Activated T-helper 1 cell treated with anti-CD3 and anti-CD28 coated beads, Interleukin-12 subunit alpha, Interleukin-12 subunit beta, Interleukin-2, Interleukin-4 antibody, amounts not matched to agents 30 ng/mL and 10 ng/mL and 1 ng/mL, durations not matched to agents 14 hours and 24 hours and 36 hours (primary cell): ENCODE measurements at regions of chr1 and their contacts with region 1.

Region 1: DNA sequence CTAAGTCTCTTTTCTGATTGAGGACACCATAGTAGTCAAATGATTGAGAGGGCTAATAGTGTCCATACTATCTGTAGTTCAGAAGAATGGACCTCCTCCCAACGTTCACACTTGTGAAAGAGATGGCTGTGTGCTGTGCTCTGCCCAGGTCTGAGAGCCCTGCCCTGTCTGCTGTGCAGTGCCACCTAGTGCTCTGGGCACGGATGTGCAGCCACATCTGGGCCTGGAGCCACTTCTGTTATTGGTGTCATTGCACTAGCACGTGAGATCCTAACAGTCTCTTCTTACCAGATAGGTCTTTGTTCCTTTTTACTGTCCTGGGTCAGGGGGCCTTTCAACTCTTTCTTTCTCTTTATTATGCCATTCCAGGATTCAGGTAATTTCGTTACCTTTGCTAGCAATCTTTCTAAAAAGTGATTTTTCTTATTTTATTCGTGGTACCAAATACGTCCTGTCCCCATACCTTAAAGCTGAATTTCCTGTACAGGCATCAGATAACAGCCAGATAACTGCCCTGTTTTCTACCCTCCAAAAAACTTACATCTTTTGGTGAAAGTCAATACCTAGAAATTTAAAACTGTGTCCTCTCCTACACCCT is 21.7 kb downstream of the INTS3 start:
- DNase-seq: peak; percentile 75
- H3K4me3 Mint-ChIP-seq: no peak overlapping the region
- H3K27ac Mint-ChIP-seq: no peak overlapping the region
- H3K4me1 Mint-ChIP-seq: peaks cover 7% of the 10 kb centered on the region
- H3K27me3 Mint-ChIP-seq: no peaks in the 10 kb centered on the region

Region 2: DNA sequence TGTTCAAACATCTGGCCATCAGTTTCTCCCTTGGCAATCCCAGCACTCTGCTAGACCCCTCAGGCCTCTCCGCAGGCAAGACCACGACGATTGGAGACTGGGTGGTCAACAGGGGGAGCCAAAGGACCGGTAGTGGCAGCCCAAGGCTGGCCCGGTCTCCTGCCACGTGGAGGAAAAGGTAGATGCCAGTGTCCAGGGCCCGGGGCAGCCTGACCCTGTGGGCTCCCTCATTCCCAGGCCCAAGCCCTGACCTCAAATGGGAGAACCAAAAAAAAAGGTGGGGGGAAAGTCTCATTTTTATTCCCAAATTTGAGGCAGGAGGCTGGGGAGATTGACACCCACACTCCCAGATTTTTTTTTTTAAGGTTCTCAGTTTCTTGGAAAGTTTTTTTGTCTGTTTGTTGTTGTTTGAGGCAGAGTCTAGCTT is 238.5 kb before region 1 on chr1:
- intact Hi-C with region 1: loop called (anchors 1 kb)
- DNase-seq: peak; percentile 65
- H3K4me3 Mint-ChIP-seq: no peak overlapping the region
- H3K27ac Mint-ChIP-seq: peak overlapping the region; percentile 55
- H3K4me1 Mint-ChIP-seq: peaks cover 21% of the 10 kb centered on the region
- H3K27me3 Mint-ChIP-seq: peaks cover 2% of the 10 kb centered on the region

Region 3: DNA sequence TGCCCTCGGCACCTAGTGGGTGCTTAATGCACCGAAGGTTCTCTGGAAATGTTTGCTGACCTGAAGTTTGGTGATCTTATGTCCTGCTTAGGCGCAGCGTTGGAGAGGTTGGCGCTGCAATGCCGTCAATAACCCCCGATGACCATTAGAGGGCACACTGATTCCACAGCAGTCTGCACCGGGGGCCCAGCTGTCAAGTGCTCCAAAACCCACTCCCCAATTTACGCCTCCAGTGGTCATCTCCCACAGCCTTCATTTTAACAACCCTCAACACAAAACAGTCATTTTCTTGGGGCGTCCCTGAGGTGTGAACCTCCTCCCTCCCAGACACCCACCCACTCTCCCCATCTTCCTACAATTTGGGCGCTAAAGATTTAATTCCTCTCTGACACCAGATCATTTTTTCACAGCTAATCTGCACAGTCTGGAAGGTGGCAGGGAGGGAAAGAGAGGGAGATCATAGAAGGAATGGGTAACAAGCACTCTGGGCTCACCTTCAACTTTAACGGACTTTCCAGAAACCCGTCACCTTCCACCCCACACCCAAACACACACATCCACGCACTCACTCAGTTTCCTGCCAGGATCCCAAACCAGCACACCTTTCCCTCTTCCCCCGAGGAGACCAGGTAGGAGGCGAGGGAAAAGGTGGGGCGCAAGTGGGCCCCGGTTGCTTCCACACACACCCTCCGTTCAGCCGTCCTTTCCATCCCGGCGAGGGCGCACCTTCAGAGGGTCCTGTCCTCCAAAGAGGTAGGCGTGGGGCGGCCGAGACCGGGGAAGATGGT is 71.6 kb before region 1 on chr1:
- intact Hi-C with region 1: loop called (anchors 1 kb)
- DNase-seq: peak; percentile 30
- H3K4me3 Mint-ChIP-seq: peak overlapping the region; percentile 73
- H3K27ac Mint-ChIP-seq: no peak overlapping the region
- H3K4me1 Mint-ChIP-seq: peaks cover 23% of the 10 kb centered on the region
- H3K27me3 Mint-ChIP-seq: peaks cover 44% of the 10 kb centered on the region

Region 4: DNA sequence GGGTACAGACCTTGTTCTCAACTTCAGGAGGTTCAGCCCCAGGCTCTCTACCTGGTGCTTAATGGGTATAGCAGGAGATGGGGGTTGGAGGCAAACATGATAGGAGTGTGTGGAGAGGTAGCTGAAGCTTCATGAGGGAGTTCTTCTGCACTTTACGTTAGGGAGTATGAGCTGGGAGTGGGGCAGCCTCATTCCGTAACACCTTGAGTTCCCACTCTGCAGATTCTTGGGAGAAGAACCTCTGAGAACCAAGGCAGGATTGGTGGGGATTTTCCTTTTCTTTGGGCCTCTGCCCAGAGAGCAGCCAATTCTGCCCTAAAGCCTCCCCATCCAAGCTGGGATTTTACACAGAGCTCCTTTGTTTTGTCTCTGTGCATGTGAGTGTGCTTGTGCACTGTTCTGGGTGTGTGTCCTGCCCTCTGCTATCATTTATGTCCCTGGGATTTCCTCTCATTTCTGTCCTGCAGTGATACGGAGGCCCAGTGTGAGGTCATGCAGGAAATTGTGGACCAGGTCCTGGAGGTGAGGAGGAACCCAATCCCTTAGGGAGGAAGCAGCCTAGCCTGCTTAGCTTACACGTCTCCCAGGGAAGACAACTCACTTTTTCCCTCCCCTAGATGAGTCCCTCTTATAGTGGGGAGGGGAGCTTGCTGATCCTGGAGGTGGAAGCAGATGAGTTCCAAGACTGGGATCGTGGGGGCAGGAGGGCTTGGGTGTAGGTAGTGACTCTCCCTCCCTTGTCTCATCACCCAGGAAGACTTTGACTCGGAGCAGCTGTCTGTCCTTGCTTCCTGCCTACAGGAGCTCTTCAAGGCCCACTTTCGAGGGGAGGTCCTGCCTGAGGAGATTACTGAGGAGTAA is 14.1 kb after region 1 on chr1:
- intact Hi-C with region 1: no loop called
- DNase-seq: no peak
- H3K4me3 Mint-ChIP-seq: no peak overlapping the region
- H3K27ac Mint-ChIP-seq: no peak overlapping the region
- H3K4me1 Mint-ChIP-seq: no peaks in the 10 kb centered on the region
- H3K27me3 Mint-ChIP-seq: no peaks in the 10 kb centered on the region